ENCODE measurements at regions of chr1 and their contacts with region 1.

Region 1: DNA sequence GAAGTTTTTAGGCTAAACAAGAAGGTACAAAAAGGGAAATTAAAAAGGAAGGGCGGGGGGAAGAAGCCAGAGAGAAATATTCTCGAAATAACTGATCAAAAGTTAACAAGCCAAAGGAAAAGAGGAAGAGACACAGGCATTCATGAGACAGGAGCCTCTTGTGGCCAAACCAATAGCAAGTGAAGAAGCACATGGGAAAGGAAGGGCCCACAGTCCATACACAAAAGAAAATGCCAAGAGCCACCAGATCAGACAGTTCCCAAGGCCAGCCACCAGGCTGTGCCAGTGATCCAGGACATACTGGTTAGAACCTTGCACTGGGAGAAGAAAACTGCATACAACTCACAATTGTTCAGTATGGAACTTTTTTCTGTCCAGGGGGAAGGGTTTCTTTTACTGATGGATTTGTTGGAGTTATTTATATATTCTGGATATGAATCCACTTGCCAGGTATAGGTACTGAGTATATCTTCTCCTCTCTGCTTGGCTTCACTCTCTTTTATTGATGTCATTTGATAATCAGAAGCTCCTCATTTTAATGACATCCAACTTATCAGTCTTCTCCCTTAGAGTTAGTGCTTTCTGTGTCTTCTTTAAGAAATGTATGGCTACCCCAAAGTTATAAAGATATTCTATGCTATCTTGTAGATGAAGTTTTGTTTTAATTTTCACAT is 76.8 kb downstream of the CD46 start:
- DNase-seq: peak; percentile 78
- H3K4me3 Mint-ChIP-seq: no peak overlapping the region
- H3K27ac Mint-ChIP-seq: peak overlapping the region; percentile 30
- H3K4me1 Mint-ChIP-seq: peaks cover 60% of the 10 kb centered on the region
- H3K27me3 Mint-ChIP-seq: no peaks in the 10 kb centered on the region
- CTCF ChIP-seq: peak; percentile 84

Region 2: GRCh38 chr1:207719234-207719633 is 109.4 kb before region 1 on chr1:
- CTCF ChIA-PET with region 1: no interaction called
- intact Hi-C with region 1: no loop called
- DNase-seq: no peak
- H3K4me3 Mint-ChIP-seq: no peak overlapping the region
- H3K27ac Mint-ChIP-seq: no peak overlapping the region
- H3K4me1 Mint-ChIP-seq: no peaks in the 10 kb centered on the region
- H3K27me3 Mint-ChIP-seq: no peaks in the 10 kb centered on the region
- CTCF ChIP-seq: no peak

Region 3: DNA sequence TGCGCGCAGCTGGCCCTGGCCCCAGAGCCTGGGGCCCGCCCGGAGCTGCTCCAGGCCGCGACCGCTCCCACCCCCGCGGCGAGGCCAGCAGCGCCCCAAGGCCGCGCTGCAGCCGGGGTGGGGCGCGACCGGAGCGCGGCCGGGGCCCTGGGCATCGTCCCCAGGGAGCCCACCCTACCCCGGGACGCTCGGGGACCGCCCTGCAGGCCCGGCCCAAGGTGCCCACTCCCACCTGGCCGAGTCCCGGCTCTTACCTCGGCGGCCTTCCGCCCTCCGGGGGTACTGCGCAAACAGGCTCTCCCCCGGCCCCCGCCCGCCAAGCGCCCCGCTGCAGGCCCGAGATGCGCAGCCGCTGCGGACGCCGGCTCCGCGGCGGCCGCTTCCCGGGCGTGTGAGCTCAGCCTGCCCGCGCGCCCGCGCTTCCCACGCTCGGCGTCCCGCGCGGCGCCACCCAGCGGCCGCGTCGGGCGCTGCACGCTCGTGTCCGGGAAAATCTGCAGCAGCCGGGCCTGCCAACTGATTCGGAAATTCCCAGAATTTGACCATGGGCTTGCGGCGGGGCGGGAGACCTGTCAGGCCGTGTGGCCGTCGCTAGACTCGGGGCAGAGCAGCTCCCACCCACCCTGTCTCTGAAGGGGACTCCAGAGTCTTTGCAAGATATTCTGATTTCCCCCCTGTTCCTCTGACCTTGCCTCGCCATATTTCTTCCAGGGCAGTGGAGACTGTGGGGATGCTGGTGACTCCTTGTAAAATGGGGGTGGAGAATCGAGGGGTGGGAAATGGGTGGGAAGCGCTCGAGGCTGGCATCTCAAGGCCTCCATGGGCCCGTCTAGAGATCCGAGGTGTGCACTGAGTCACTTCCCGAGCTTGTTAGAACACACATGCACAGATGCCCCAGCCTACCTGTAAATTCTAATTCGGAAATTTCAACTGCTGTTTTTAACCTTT is 40.4 kb after region 1 on chr1:
- CTCF ChIA-PET with region 1: interaction called, 28 read pairs
- intact Hi-C with region 1: loop called (anchors 1 kb)
- DNase-seq: peak; percentile 86
- H3K4me3 Mint-ChIP-seq: peak overlapping the region; percentile 83
- H3K27ac Mint-ChIP-seq: peak overlapping the region; percentile 36
- H3K4me1 Mint-ChIP-seq: peaks cover 27% of the 10 kb centered on the region
- H3K27me3 Mint-ChIP-seq: no peaks in the 10 kb centered on the region
- CTCF ChIP-seq: peak; percentile 81

Region 4: GRCh38 chr1:207925210-207925609 is 96.6 kb after region 1 on chr1:
- CTCF ChIA-PET with region 1: no interaction called
- intact Hi-C with region 1: no loop called
- DNase-seq: peak; percentile 34
- H3K4me3 Mint-ChIP-seq: no peak overlapping the region
- H3K27ac Mint-ChIP-seq: no peak overlapping the region
- H3K4me1 Mint-ChIP-seq: no peaks in the 10 kb centered on the region
- H3K27me3 Mint-ChIP-seq: peaks cover 9% of the 10 kb centered on the region
- CTCF ChIP-seq: no peak

Measured in Calu3 (cell line).